ENCODE measurements at regions of chr10 and their contacts with region 1.

Region 1: GRCh38 chr10:91551856-91552255 is 81.0 kb downstream of the PPP1R3C start:
- DNase-seq: peak; percentile 62 to 72 (median 66)
- H3K4me3 ChIP-seq: no peak overlapping the region
- H3K27ac ChIP-seq: no peak overlapping the region
- H3K4me1 ChIP-seq: no peaks in the 10 kb centered on the region
- H3K27me3 ChIP-seq: no peaks in the 10 kb centered on the region
- CTCF ChIP-seq: peak; percentile 45 to 72 (median 66)
- EP300 ChIP-seq: no peak
- POLR2A ChIP-seq: no peak

Region 2: DNA sequence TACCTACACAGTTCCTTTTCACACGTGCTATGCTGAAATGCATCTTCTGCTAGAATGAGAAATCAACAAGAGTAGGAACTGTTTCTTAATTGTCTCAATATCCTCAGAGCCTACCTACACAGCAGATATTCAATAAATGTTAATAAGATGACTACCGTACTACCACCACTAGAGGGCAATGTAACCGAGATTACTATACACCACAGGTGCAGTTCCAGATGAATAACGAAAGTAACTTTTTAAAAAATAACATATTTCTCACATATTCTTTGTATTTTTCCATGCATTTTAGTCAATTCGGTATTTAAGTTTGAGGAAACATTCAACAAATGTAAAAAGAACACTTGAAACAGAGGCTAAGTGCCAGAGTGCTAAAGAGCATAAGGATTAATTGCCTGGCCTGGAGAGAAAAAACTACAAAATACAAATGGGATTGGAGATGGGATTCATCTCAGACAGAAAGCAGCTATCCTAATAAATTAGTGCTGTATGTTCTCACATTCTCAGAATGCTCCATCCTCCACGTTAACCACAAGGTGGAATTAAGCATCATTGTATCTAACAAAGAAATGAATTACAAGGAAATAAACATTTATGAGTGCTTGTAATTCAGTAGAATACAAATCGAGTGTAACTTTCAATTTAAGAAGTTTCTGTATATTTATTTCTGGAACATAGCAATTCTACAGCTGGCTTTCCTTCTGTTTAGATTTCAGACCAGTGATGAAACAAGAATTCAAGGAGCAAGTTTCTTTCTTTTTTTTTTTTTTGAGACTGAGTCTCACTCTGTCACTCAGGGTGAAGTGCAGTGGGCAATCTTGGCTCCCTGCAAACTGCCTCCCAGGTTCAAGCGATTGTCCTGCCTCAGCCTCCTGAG is 162.0 kb before region 1 on chr10:
- intact Hi-C with region 1: loop called in 1 of 4 experiments (anchors 5 kb)
- DNase-seq: no peak
- H3K4me3 ChIP-seq: no peak overlapping the region
- H3K27ac ChIP-seq: no peak overlapping the region
- H3K4me1 ChIP-seq: no peaks in the 10 kb centered on the region
- H3K27me3 ChIP-seq: no peaks in the 10 kb centered on the region
- CTCF ChIP-seq: peak in 2 of 3 donors; percentile 57 to 69
- EP300 ChIP-seq: no peak
- POLR2A ChIP-seq: no peak

Region 3: DNA sequence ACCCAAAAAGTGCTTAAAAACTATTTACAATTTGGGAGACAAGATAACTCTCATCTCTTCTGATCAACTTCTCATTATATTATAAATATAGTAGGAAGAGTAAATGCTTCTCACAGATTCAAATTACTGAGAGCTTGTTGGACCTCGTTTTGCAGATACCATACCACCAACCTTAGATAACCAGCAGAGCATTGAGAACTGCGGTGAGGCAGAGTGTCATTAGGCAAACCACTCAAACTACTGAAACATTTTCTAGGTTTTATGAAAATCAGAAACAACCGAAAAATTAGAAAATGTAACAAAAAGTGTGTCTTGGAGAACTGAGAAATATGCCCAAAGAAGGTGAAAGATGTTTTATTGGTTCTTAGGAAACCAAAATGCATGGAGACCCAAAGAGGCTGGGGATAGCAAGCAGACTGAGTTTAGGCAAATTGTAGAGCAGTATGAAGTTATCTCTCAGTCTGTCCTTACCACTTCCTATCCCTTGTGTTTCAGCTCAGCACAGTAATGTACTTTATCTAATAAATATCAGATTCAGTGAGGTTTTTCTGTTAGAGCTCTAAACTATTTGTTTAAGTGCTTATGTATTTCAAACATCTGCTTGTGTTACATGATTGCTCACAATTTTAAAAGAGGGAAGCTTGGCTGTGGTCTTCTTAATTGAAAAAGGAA is 63.8 kb before region 1 on chr10:
- intact Hi-C with region 1: loop called in 2 of 4 experiments (anchors 5 to 10 kb)
- DNase-seq: no peak
- H3K4me3 ChIP-seq: no peak overlapping the region
- H3K27ac ChIP-seq: no peak overlapping the region
- H3K4me1 ChIP-seq: no peaks in the 10 kb centered on the region
- H3K27me3 ChIP-seq: no peaks in the 10 kb centered on the region
- CTCF ChIP-seq: no peak
- EP300 ChIP-seq: no peak
- POLR2A ChIP-seq: no peak

Region 4: GRCh38 chr10:91493313-91493712 is 58.5 kb before region 1 on chr10:
- intact Hi-C with region 1: loop called in 2 of 4 experiments (anchors 5 to 10 kb)
- DNase-seq: no peak
- H3K4me3 ChIP-seq: no peak overlapping the region
- H3K27ac ChIP-seq: no peak overlapping the region
- H3K4me1 ChIP-seq: no peaks in the 10 kb centered on the region
- H3K27me3 ChIP-seq: no peaks in the 10 kb centered on the region
- CTCF ChIP-seq: peak in 2 of 3 donors; percentile 25 to 52
- EP300 ChIP-seq: no peak
- POLR2A ChIP-seq: no peak

Region 5: GRCh38 chr10:91632671-91633550 is 81.1 kb after region 1 on chr10 and contains the start of gene PPP1R3C:
- intact Hi-C with region 1: loop called in 3 of 4 experiments (anchors 2 to 10 kb)
- DNase-seq: peak; percentile 86 to 89 (median 88)
- H3K4me3 ChIP-seq: peak within 1 kb of the TSS; percentile 67
- H3K27ac ChIP-seq: peak within 1 kb of the TSS; percentile 61 to 71
- H3K4me1 ChIP-seq: peaks cover 3% of the 10 kb centered on the region
- H3K27me3 ChIP-seq: no peaks in the 10 kb centered on the region
- CTCF ChIP-seq: peak; percentile 16 to 41 (median 31)
- EP300 ChIP-seq: no peak
- POLR2A ChIP-seq: peak; percentile 70
- total RNA-seq, gene PPP1R3C: 2.9 to 37.3 (median 16.7) TPM

Region 6: DNA sequence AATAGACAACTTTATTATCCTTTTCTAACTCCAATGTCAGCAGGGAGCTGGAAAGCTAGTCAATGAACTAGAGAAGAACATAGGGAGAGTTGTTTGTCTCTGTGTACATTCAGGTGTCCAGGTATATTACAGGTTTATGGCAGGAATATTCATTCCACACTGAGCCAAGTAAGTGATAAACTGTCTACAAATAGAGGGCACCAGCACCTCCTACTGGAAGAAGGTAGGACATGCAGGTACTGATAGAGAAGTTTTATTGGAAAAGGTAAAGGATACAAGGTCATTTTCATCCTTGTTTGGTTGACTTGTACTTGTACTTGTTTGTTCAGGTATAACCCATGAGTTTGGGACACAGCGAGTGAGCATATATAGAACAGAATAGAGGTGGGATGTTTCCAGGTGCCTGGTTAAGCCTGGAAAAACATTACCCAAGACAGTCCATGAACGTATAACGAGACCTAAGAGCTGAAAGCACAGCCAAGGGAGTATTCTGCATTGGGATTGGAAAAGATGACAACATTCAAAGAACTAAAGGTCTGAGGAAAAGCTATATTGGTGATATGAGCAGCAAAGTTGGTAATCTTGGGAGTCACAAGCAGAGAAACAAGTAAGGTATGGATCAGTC is 142.4 kb after region 1 on chr10:
- intact Hi-C with region 1: no loop called
- DNase-seq: no peak
- H3K4me3 ChIP-seq: no peak overlapping the region
- H3K27ac ChIP-seq: no peak overlapping the region
- H3K4me1 ChIP-seq: no peaks in the 10 kb centered on the region
- H3K27me3 ChIP-seq: no peaks in the 10 kb centered on the region
- CTCF ChIP-seq: no peak
- EP300 ChIP-seq: no peak
- POLR2A ChIP-seq: no peak